Right cardiac atrium (tissue), 5 donors: ENCODE measurements at regions of chr4 and their contacts with region 1.

Region 1: GRCh38 chr4:42568610-42569207 is 88.2 kb downstream of the ATP8A1 start:
- DNase-seq: peak in 1 of 3 donors; percentile 57
- ATAC-seq: peak; percentile 87 to 89
- H3K4me3 ChIP-seq: no peak overlapping the region
- H3K27ac ChIP-seq: no peak overlapping the region
- H3K4me1 ChIP-seq: peaks cover 2% of the 10 kb centered on the region
- H3K27me3 ChIP-seq: no peaks in the 10 kb centered on the region

Region 2: DNA sequence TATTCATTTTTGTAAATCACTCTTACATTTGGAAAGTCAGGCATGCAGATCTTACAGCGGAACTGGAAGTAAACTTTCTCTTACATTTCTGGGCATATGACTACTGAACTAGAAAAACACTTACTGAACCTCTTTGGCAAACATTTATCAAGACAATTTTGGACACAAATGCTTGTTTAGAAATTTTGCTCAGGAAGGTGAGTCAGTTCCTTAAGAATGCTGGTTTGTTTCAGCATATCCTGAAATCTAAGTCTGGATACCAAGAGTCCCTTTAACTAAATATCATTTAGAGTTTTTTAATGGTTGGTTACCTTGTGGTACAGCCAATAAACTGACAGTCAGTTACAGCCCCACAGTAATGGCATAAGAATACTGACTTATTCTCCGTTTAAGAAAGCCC is 156.5 kb before region 1 on chr4:
- intact Hi-C with region 1: no loop called
- DNase-seq: no peak
- ATAC-seq: peak; percentile 72 to 92
- H3K4me3 ChIP-seq: no peak overlapping the region
- H3K27ac ChIP-seq: no peak overlapping the region
- H3K4me1 ChIP-seq: peaks cover 2% of the 10 kb centered on the region
- H3K27me3 ChIP-seq: no peaks in the 10 kb centered on the region

Region 3: GRCh38 chr4:42750091-42750490 is 181.4 kb after region 1 on chr4:
- intact Hi-C with region 1: loop called (anchors 2 to 10 kb)
- DNase-seq: peak in 1 of 3 donors; percentile 42
- ATAC-seq: peak; percentile 70 to 76
- H3K4me3 ChIP-seq: no peak overlapping the region
- H3K27ac ChIP-seq: no peak overlapping the region
- H3K4me1 ChIP-seq: no peaks in the 10 kb centered on the region
- H3K27me3 ChIP-seq: no peaks in the 10 kb centered on the region

Region 4: DNA sequence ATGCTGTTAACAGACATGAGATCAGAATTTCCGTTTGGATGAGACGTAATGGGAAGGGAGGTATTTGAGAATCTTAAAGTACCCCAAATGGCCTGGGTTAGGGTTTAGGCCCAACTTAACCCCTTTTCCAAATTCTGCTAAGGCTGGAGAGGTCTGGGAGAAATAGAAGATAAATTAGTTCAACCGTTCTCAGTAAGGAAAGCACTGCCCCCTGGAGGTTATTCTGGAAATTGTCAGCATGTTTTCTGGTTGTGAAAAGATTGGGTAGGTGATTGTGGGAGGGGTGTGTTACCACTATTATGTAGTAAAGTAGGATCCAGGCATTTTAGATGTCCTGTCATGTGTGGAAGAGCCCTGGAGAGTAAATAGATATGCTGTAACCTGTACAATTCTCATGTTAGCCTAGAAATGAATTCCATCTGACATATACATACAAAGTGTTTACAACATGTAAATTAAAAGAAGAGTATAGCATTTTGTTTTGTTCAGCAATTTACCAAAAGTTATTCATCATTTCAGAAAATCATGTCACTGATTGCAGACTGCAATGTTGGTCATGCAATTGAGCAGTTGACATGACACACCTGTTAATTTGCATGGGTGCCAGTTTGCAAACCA is 297.0 kb after region 1 on chr4:
- intact Hi-C with region 1: loop called in 3 of 4 experiments (anchors 5 to 10 kb)
- DNase-seq: peak in 1 of 3 donors; percentile 26
- ATAC-seq: peak in 1 of 2 donors; percentile 36
- H3K4me3 ChIP-seq: no peak overlapping the region
- H3K27ac ChIP-seq: no peak overlapping the region
- H3K4me1 ChIP-seq: no peaks in the 10 kb centered on the region
- H3K27me3 ChIP-seq: no peaks in the 10 kb centered on the region